ENCODE measurements at regions of chr12 and their contacts with region 1.

Region 1: DNA sequence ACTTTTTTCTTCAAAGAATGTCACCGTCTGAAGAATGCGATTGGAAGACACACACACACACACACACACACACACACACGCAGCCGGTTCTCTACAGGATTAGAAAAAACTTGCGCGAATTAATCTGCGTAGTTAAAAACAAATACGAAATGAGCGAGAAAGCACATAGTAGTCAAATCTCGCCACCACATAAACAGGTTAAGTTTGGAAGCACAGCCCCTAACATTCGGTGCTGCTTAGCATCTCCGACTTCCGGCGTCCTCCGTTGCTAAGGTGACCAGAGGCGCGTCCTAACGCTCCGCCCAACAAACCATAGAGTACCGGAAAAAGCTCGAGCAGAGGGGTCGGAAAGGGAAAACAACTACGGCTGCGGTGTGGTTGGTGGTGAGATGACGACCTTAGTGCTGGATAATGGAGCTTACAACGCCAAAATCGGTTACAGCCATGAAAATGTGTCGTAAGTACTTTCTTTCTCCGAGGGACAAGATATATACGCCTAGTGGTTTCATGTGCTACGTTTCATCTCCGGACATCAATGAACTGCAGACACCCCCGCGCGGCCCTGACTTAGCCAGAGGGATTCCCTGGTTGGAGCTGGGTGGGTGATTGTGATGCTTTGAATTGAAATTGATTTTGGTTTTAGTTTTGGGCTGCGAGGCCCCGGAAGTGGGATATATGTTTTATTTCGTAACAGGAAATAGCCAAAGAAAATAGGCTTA is at the start of gene ACTR6:
- DNase-seq: peak; percentile 91
- ATAC-seq: peak; percentile 87
- H3K4me3 ChIP-seq: peak within 1 kb of the TSS; percentile 82
- H3K27ac ChIP-seq: peak within 1 kb of the TSS; percentile 83
- H3K4me1 ChIP-seq: peaks cover 6% of the 10 kb centered on the region; the same call in 1 of the 2 replicates
- H3K27me3 ChIP-seq: no peaks in the 10 kb centered on the region
- CTCF ChIP-seq: no peak
- EP300 ChIP-seq: peak in 1 of 2 experiments; percentile 2; a peak in 1 of 4 replicates
- POLR2A ChIP-seq: peak; percentile 82
- RAD21 ChIP-seq: no peak
- polyA plus RNA-seq, gene ACTR6: 56.1 to 62.4 TPM

Region 2: GRCh38 chr12:100163416-100164152 is 37.0 kb before region 1 on chr12:
- CTCF ChIA-PET with region 1: interaction called, 6 read pairs
- POLR2A ChIA-PET with region 1: no interaction called
- RAD21 ChIA-PET with region 1: interaction called, 6 read pairs
- SMC1A ChIA-PET with region 1: interaction called, 3 read pairs
- in situ Hi-C with region 1: no loop called
- intact Hi-C with region 1: loop called (anchors 2 kb)
- DNase-seq: no peak
- ATAC-seq: peak; percentile 100
- H3K4me3 ChIP-seq: no peak overlapping the region
- H3K27ac ChIP-seq: no peak overlapping the region; the same call in 1 of the 2 replicates
- H3K4me1 ChIP-seq: 0 out of 2 replicates have a peak, but pooled peaks cover 3% of the 10 kb centered on the region
- H3K27me3 ChIP-seq: no peaks in the 10 kb centered on the region
- CTCF ChIP-seq: peak; percentile 7 to 14 (median 12); a peak in 2 of 6 replicates
- EP300 ChIP-seq: no peak
- POLR2A ChIP-seq: peak; percentile 55; the same call in 1 of the 2 replicates
- RAD21 ChIP-seq: 0 out of 2 replicates have a peak, but pooled peaks have one; percentile 5

Region 3: GRCh38 chr12:100382338-100382737 is 181.7 kb after region 1 on chr12:
- CTCF ChIA-PET with region 1: no interaction called
- POLR2A ChIA-PET with region 1: no interaction called
- RAD21 ChIA-PET with region 1: no interaction called
- SMC1A ChIA-PET with region 1: no interaction called
- in situ Hi-C with region 1: no loop called
- intact Hi-C with region 1: no loop called
- DNase-seq: no peak
- ATAC-seq: no peak
- H3K4me3 ChIP-seq: no peak overlapping the region
- H3K27ac ChIP-seq: no peak overlapping the region
- H3K4me1 ChIP-seq: no peaks in the 10 kb centered on the region
- H3K27me3 ChIP-seq: no peaks in the 10 kb centered on the region
- CTCF ChIP-seq: no peak
- EP300 ChIP-seq: no peak
- POLR2A ChIP-seq: no peak
- RAD21 ChIP-seq: no peak

Region 4: DNA sequence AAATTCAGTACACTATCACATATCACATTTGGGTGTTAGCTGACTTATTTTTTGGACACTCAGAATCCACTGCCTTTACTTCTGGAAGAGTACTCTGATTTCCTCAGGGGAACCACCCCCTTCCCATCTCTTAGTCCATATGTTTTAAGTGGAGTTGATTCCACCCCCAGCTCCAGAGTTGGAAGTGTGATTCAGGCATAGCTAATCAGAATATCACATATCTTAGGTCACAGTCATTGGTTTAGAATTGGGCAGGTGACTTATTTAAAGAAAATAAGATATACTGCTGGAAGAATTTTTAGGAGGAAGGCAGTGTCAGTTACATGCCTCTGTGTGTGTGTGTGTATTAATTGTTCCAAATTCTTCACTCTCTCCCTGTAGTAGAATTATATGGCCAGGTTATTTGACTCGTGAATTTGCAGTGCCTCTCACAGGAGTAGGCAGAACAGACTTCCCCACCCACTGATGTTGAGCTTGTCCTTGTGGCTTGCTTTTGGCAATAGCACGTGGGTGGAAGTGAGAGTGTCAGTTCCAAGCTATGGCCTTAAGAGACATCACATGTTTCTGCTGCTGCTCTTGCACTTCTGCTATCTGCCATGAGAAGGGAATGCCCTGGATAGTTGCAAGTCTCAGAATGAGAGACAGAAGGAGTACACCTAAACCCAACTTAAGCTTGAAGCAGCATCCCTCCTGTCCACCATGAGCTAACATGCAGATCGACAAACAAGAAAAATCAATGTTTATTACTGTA is 366.4 kb after region 1 on chr12:
- CTCF ChIA-PET with region 1: no interaction called
- POLR2A ChIA-PET with region 1: no interaction called
- RAD21 ChIA-PET with region 1: no interaction called
- SMC1A ChIA-PET with region 1: no interaction called
- in situ Hi-C with region 1: no loop called
- intact Hi-C with region 1: no loop called
- DNase-seq: peak; percentile 71
- ATAC-seq: peak; percentile 97
- H3K4me3 ChIP-seq: no peak overlapping the region
- H3K27ac ChIP-seq: no peak overlapping the region
- H3K4me1 ChIP-seq: peaks cover 7% of the 10 kb centered on the region
- H3K27me3 ChIP-seq: no peaks in the 10 kb centered on the region
- CTCF ChIP-seq: no peak
- EP300 ChIP-seq: peak in 1 of 2 experiments; percentile 9; a peak in 1 of 4 replicates
- POLR2A ChIP-seq: no peak
- RAD21 ChIP-seq: no peak